ENCODE measurements at regions of chr13 and their contacts with region 1.

Region 1: GRCh38 chr13:26656919-26657318 is 99.4 kb downstream of the WASF3 start:
- DNase-seq: peak; percentile 82
- ATAC-seq: peak; percentile 84
- H3K4me3 ChIP-seq: no peak overlapping the region
- H3K27ac ChIP-seq: no peak overlapping the region
- H3K4me1 ChIP-seq: peaks cover 6% of the 10 kb centered on the region
- H3K27me3 ChIP-seq: no peaks in the 10 kb centered on the region
- CTCF ChIP-seq: peak; percentile 42
- POLR2A ChIP-seq: no peak
- RAD21 ChIP-seq: 0 out of 2 replicates have a peak, but pooled peaks have one; percentile 15

Region 2: DNA sequence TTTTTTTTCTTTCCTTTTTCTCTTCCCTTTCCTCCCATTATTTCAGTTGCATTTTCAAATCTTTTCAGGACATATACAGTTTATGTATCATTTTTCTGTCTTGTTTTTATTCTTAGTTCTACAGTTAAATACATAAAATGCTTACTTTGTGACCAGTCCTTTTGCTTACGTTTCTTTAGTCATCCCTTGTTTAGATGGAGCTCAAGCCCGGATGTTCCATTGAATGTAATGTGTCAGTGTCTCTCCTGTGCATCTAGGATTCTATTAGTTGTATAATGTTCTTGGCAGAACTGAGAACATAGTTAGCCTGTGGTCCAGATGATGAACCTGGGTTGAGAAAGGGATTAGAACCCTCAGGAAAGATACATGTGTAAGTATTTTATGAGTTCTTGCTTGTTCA is 81.7 kb before region 1 on chr13:
- CTCF ChIA-PET with region 1: no interaction called
- POLR2A ChIA-PET with region 1: no interaction called
- dilution Hi-C with region 1: no loop called
- in situ Hi-C with region 1: no loop called
- intact Hi-C with region 1: loop called (anchors 5 kb)
- DNase-seq: peak; percentile 88
- ATAC-seq: peak; percentile 97
- H3K4me3 ChIP-seq: no peak overlapping the region
- H3K27ac ChIP-seq: no peak overlapping the region; the same call in 1 of the 2 replicates
- H3K4me1 ChIP-seq: 0 out of 2 replicates have a peak, but pooled peaks cover 2% of the 10 kb centered on the region
- H3K27me3 ChIP-seq: no peaks in the 10 kb centered on the region
- CTCF ChIP-seq: no peak
- POLR2A ChIP-seq: no peak
- RAD21 ChIP-seq: no peak

Region 3: DNA sequence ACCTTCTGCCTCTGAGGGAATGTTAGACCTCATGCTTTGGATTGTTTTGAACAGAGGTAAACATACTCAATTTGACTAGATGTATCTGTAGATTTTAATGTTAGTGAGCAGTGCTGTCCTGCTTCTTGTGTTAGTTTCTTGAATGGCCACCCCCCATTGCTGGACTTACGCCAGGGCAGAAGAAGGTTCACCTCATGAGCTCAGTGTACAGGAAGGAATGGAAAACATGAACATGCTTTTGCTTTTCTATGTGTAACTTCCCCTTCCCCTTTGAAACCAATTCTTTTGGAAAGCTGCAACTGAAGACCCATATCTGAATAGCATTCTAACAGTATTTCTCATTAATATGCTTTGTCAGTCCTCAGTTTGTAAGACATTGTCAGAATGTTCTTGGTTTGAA is 67.2 kb before region 1 on chr13:
- CTCF ChIA-PET with region 1: no interaction called
- POLR2A ChIA-PET with region 1: no interaction called
- dilution Hi-C with region 1: no loop called
- in situ Hi-C with region 1: no loop called
- intact Hi-C with region 1: no loop called
- DNase-seq: peak; percentile 56
- ATAC-seq: 0 out of 2 replicates have a peak, but pooled peaks have one; percentile 28
- H3K4me3 ChIP-seq: no peak overlapping the region
- H3K27ac ChIP-seq: no peak overlapping the region
- H3K4me1 ChIP-seq: peaks cover 2% of the 10 kb centered on the region; the same call in 1 of the 2 replicates
- H3K27me3 ChIP-seq: no peaks in the 10 kb centered on the region
- CTCF ChIP-seq: no peak
- POLR2A ChIP-seq: no peak
- RAD21 ChIP-seq: no peak

Region 4: GRCh38 chr13:26619358-26619757 is 37.6 kb before region 1 on chr13:
- CTCF ChIA-PET with region 1: no interaction called
- POLR2A ChIA-PET with region 1: no interaction called
- dilution Hi-C with region 1: no loop called
- in situ Hi-C with region 1: no loop called
- intact Hi-C with region 1: loop called (anchors 2 kb)
- DNase-seq: peak; percentile 91
- ATAC-seq: peak; percentile 85
- H3K4me3 ChIP-seq: no peak overlapping the region
- H3K27ac ChIP-seq: no peak overlapping the region
- H3K4me1 ChIP-seq: peaks cover 3% of the 10 kb centered on the region
- H3K27me3 ChIP-seq: no peaks in the 10 kb centered on the region
- CTCF ChIP-seq: no peak
- POLR2A ChIP-seq: no peak
- RAD21 ChIP-seq: no peak

Region 5: DNA sequence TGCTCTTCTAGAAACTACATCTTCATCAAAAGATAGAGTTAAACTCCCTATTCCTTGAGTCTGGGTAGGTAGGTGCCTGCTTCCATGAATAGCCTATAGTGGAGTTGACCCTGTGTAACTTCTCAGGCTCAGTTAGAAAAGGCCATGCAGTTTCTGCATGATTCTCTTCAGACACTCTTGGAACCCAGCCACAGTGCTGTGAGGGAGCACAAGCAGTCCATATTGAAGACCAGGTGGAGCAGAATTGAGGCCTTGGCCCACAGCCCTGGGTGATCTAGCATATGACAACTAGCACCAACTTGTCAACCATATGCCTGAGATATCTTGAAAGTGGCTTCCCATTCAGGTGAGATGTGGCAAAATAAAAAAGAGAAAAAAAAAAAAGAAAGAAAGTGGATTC is 1471.1 kb after region 1 on chr13:
- CTCF ChIA-PET with region 1: no interaction called
- POLR2A ChIA-PET with region 1: no interaction called
- dilution Hi-C with region 1: no loop called
- in situ Hi-C with region 1: no loop called
- intact Hi-C with region 1: no loop called
- DNase-seq: no peak
- ATAC-seq: no peak
- H3K4me3 ChIP-seq: no peak overlapping the region
- H3K27ac ChIP-seq: no peak overlapping the region
- H3K4me1 ChIP-seq: peaks cover 2% of the 10 kb centered on the region; the same call in 1 of the 2 replicates
- H3K27me3 ChIP-seq: no peaks in the 10 kb centered on the region
- CTCF ChIP-seq: no peak
- POLR2A ChIP-seq: no peak
- RAD21 ChIP-seq: no peak

Measured in IMR-90 (cell line).